GM12878 (cell line): ENCODE measurements at regions of chr3 and their contacts with region 1.

Region 1: DNA sequence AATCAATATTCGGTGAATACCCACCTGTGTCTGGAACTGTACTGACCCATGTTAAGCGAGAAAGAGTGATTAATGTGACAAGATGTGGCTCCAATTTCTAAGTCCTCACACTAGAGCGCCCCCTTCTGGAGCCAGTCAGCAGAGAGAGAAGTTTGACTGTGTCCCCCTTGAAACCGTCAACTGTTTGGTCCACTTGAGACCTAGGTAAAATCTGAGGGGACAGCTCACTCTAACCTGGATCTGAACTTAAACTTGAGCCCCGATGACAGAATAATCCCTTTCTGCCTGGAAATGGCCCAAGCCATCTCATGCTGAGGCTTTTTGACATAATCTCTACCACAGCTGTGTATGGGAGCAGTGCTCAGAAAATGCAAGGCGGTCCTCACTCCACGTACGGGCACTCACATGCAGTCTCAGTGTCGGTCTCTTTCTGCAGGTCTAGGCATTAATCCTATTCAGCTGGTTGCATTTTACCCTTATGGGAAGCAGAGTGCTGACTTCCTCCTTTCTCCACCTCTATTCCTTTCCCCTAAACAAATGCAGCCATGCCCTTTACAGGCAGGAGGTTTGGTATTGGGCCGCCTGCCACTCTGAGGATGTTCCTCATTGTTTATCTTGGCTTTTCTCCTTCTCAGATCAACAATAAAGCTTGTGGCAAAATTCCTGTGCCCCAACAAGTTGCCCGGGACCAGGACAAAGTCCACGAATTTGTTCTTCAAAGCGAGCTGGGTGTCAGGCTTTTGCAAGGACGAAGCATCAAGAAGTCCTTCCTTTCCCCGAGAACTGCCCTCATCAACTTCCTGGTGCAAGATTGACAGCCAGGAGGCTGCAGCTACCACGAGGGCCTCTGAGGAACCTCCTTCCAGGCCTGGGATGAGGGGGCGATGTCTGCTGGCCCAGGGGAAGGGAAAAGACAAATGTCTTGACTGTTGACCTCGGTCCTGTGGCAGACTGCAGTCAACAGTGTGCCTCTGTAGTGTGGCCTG is 47.5 kb upstream of the LIMD1 start:
- DNase-seq: no peak
- ATAC-seq: peak; percentile 39; the same call in 2 of the 3 replicates
- H3K4me3 ChIP-seq: no peak overlapping the region
- H3K27ac ChIP-seq: no peak overlapping the region
- H3K4me1 ChIP-seq: peaks cover 6% of the 10 kb centered on the region; the same call in 1 of the 2 replicates
- H3K27me3 ChIP-seq: no peaks in the 10 kb centered on the region
- CTCF ChIP-seq: peak in 2 of 3 experiments; percentile 45 to 48; a peak in 3 of 6 replicates
- EP300 ChIP-seq: no peak
- POLR2A ChIP-seq: no peak
- RAD21 ChIP-seq: 0 out of 2 replicates have a peak, but pooled peaks have one; percentile 17

Region 2: GRCh38 chr3:45599424-45599886 is 52.4 kb after region 1 on chr3:
- CTCF ChIA-PET with region 1: interaction called, 11 read pairs
- POLR2A ChIA-PET with region 1: interaction called, 3 read pairs
- RAD21 ChIA-PET with region 1: interaction called, 5 read pairs
- SMC1A ChIA-PET with region 1: interaction called, 10 read pairs
- in situ Hi-C with region 1: no loop called
- intact Hi-C with region 1: loop called (anchors 5 kb)
- DNase-seq: no peak
- ATAC-seq: no peak
- H3K4me3 ChIP-seq: peak overlapping the region; percentile 68
- H3K27ac ChIP-seq: no peak overlapping the region
- H3K4me1 ChIP-seq: peaks cover 19% of the 10 kb centered on the region
- H3K27me3 ChIP-seq: no peaks in the 10 kb centered on the region
- CTCF ChIP-seq: no peak
- EP300 ChIP-seq: no peak
- POLR2A ChIP-seq: peak; percentile 52; the same call in 1 of the 2 replicates
- RAD21 ChIP-seq: no peak